B cell (primary cell): ENCODE measurements at regions of chr21 and their contacts with region 1.

Region 1: DNA sequence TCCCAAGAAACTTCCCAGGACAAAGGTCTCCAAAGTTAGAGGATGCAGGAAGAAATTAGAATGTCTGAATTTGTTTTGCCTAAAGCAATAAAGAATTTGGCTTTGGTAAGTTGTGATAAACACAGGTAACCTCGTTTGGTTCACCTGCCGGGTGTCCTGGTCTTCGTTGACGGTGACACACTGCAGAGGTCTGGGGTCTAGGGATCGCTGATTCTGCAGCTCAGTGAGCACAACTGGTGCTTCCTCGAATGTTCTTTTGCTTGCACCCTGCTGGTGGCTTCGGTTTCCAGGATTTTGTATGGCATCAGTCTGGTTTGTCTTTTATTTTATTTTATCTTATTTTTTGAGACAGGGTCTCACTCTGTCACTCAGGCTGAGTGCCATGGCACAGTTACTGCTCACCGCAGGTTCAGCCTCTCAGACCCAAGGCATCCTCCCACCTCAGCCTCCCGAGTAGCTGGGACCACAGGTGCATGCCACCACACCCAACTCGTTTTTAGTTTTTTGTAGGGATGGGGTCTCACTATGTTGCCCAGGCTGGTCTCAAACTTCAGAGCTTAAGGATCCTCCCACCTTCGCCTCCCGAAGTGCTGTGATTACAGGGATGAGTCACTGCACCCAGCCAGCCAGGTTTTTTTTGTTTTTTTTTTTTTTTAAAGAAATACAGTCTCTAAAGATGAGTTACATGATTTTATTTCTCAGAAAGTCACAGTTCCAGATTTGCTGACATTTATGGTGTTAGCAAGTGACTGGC is 28.9 kb downstream of the BACE2 start:
- DNase-seq: no peak
- ATAC-seq: no peak
- H3K4me3 ChIP-seq: no peak overlapping the region
- H3K4me3 Mint-ChIP-seq: peak overlapping the region; percentile 41
- H3K27ac ChIP-seq: no peak overlapping the region
- H3K27ac Mint-ChIP-seq: peak overlapping the region; percentile 50
- H3K4me1 ChIP-seq: peaks cover 38 to 61% of the 10 kb centered on the region in 2 donors
- H3K4me1 Mint-ChIP-seq: peaks cover 70% of the 10 kb centered on the region
- H3K27me3 ChIP-seq: no peaks in the 10 kb centered on the region
- H3K27me3 Mint-ChIP-seq: no peaks in the 10 kb centered on the region
- CTCF ChIP-seq: no peak

Region 2: DNA sequence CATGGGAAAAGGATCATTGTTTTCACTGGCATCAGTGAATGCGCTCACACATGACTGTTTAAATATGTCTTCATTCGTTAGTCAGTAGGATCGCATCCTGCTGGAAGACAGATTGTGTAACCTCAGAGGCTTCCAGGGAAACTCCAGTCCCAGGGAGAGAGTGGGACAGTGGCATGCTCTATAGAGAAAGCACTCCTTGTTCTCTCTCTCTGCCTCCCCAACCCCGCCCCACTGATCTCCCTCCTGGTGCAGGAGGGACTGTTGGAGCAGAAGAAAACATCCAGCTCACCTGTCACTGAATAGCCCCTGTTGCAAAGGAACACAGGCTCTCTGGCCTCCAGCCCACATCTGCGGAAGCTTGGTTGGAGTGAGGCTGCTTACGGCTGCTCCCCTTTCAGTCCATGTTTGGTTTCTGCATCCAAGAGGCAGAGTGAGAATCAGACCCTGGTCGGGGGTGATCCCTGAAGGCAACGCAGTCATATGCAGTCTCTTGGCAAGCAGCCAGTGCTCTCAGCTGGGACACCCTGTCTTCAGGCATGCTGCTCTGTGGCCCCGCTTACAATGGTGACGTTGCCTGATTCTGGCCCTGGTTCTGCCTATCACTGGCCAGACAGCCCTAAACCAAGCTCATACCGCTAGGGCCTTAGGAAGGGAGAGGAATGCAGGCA is 10.7 kb after region 1 on chr21:
- CTCF ChIA-PET with region 1: no interaction called
- POLR2A ChIA-PET with region 1: no interaction called
- intact Hi-C with region 1: no loop called
- DNase-seq: no peak
- ATAC-seq: no peak
- H3K4me3 ChIP-seq: no peak overlapping the region
- H3K4me3 Mint-ChIP-seq: no peak overlapping the region
- H3K27ac ChIP-seq: no peak overlapping the region
- H3K27ac Mint-ChIP-seq: no peak overlapping the region
- H3K4me1 ChIP-seq: peaks cover 0 to 5% of the 10 kb centered on the region in 2 donors
- H3K4me1 Mint-ChIP-seq: peaks cover 7% of the 10 kb centered on the region
- H3K27me3 ChIP-seq: no peaks in the 10 kb centered on the region
- H3K27me3 Mint-ChIP-seq: no peaks in the 10 kb centered on the region
- CTCF ChIP-seq: no peak

Region 3: GRCh38 chr21:41228021-41228400 is 31.2 kb after region 1 on chr21:
- CTCF ChIA-PET with region 1: no interaction called
- POLR2A ChIA-PET with region 1: no interaction called
- intact Hi-C with region 1: loop called (anchors 5 kb)
- DNase-seq: peak; percentile 24
- ATAC-seq: no peak
- H3K4me3 ChIP-seq: no peak overlapping the region
- H3K4me3 Mint-ChIP-seq: peak overlapping the region; percentile 84
- H3K27ac ChIP-seq: peak overlapping the region; percentile 87 to 89
- H3K27ac Mint-ChIP-seq: peak overlapping the region; percentile 87
- H3K4me1 ChIP-seq: peaks cover 43 to 54% of the 10 kb centered on the region in 2 donors
- H3K4me1 Mint-ChIP-seq: peaks cover 61% of the 10 kb centered on the region
- H3K27me3 ChIP-seq: no peaks in the 10 kb centered on the region
- H3K27me3 Mint-ChIP-seq: no peaks in the 10 kb centered on the region
- CTCF ChIP-seq: no peak